ENCODE measurements at regions of chr6 and their contacts with region 1.

Region 1: DNA sequence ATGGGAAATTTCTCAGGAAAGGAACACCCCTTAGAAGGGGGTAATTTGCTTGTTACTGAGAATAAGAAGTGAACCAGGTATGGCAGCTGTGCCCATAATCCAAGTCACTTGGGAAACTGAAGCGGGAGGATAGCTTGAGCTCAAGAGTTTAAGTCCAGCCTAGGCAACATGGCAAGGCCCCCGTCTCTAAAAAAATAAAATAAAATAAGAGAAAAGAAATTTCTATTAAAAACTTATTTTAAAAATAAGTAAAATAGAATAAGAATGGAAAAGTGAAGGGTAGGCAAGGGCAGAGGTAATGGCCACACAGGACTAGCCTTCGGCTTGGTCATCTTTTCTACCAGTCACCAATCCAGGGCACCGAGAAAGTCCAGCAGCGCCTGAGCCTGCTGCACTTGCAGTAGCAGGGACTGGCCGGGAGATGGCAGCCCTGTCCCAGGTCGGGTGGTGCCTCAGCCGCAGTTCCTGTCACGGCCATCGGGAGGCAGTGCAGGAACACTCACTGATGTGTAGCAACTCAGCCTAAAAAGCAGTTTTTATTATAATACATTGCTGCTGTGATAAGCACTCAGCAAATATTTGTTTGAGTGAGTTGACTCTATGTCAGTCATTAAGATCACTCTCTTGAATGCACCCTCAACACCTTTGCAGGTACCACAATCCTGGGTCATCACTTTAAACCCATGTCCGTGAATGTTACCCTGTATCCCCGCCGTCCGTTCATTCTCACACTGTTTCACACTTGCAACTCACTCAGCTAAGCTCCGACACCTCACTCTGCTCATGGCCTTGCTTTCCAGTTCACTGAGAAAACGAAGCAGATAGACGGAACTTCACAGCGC is 23.2 kb upstream of the GCM1 start:
- DNase-seq: peak; percentile 91 to 94 (median 94)
- ATAC-seq: peak; percentile 100
- H3K4me3 ChIP-seq: no peak overlapping the region
- H3K4me1 ChIP-seq: no peaks in the 10 kb centered on the region
- CTCF ChIP-seq: peak; percentile 100

Region 2: GRCh38 chr6:52953911-52954839 is 217.7 kb before region 1 on chr6:
- intact Hi-C with region 1: no loop called
- DNase-seq: no peak
- ATAC-seq: no peak
- H3K4me3 ChIP-seq: no peak overlapping the region
- H3K4me1 ChIP-seq: no peaks in the 10 kb centered on the region
- CTCF ChIP-seq: no peak

Region 3: GRCh38 chr6:53369876-53370515 is 198.2 kb after region 1 on chr6:
- intact Hi-C with region 1: no loop called
- DNase-seq: no peak
- ATAC-seq: no peak
- H3K4me3 ChIP-seq: no peak overlapping the region
- H3K4me1 ChIP-seq: no peaks in the 10 kb centered on the region
- CTCF ChIP-seq: no peak

Region 4: GRCh38 chr6:53410508-53411258 is 238.9 kb after region 1 on chr6:
- intact Hi-C with region 1: loop called in 1 of 2 experiments (anchors 10 kb)
- DNase-seq: peak; percentile 48 to 66 (median 50)
- ATAC-seq: peak; percentile 88
- H3K4me3 ChIP-seq: no peak overlapping the region
- H3K4me1 ChIP-seq: no peaks in the 10 kb centered on the region
- CTCF ChIP-seq: peak; percentile 48

Region 5: GRCh38 chr6:53437557-53438202 is 265.9 kb after region 1 on chr6:
- intact Hi-C with region 1: loop called in 1 of 2 experiments (anchors 5 kb)
- DNase-seq: peak in 1 of 3 donors; percentile 38
- ATAC-seq: peak; percentile 72
- H3K4me3 ChIP-seq: no peak overlapping the region
- H3K4me1 ChIP-seq: no peaks in the 10 kb centered on the region
- CTCF ChIP-seq: peak; percentile 8

Region 6: GRCh38 chr6:53484476-53485280 is 312.9 kb after region 1 on chr6:
- intact Hi-C with region 1: loop called (anchors 5 kb)
- DNase-seq: peak in 1 of 3 donors; percentile 97
- ATAC-seq: peak; percentile 78
- H3K4me3 ChIP-seq: no peak overlapping the region
- H3K4me1 ChIP-seq: peaks cover 5% of the 10 kb centered on the region
- CTCF ChIP-seq: peak; percentile 93

Region 7: DNA sequence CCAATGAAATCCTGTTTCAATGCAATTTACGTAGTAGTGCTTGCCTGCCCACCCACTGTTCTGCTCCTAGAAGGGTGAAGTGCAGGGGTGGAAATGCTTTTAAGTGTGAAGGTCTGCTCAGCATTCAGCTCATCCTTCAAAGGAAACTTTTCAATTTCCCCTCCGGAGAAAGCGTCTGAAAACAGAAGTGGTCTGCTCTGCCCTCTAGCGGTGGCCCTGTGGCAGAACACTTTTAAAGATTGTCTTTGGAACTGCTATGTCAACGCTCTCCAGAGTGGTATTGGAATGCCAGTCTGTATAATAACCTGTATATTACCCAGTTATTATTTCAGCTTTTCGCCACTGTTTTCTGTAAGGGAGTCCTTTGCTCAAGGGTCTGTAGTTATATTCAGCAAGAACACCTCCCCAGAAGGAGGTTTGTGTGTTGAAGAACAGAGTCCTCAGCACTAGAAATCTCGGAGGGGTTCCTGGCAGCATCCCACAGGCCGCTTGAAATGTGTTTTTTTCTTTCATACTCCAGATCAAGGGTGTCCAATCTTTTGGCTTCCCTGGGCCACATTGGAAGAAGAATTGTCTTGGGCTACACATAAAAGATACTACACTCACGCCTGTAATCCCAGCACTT is 556.9 kb after region 1 on chr6:
- intact Hi-C with region 1: loop called in 1 of 2 experiments (anchors 5 kb)
- DNase-seq: peak in 2 of 3 donors; percentile 45 to 49
- ATAC-seq: peak; percentile 76
- H3K4me3 ChIP-seq: no peak overlapping the region
- H3K4me1 ChIP-seq: peaks cover 6% of the 10 kb centered on the region
- CTCF ChIP-seq: peak; percentile 68